Caco-2 (cell line): ENCODE measurements at regions of chr6 and their contacts with region 1.

Region 1: GRCh38 chr6:91500689-91501303 is 913.9 kb upstream of the MAP3K7 start:
- DNase-seq: no peak
- H3K4me3 ChIP-seq: no peak overlapping the region
- H3K4me3 Mint-ChIP-seq: no peak overlapping the region
- H3K27ac Mint-ChIP-seq: no peak overlapping the region
- H3K4me1 ChIP-seq: no peaks in the 10 kb centered on the region
- H3K4me1 Mint-ChIP-seq: no peaks in the 10 kb centered on the region
- H3K27me3 ChIP-seq: no peaks in the 10 kb centered on the region
- H3K27me3 Mint-ChIP-seq: no peaks in the 10 kb centered on the region
- CTCF ChIP-seq: no peak

Region 2: GRCh38 chr6:89667872-89668556 is 1832.8 kb before region 1 on chr6:
- CTCF ChIA-PET with region 1: interaction called, 11 read pairs
- POLR2A ChIA-PET with region 1: no interaction called
- intact Hi-C with region 1: no loop called
- DNase-seq: no peak
- H3K4me3 ChIP-seq: no peak overlapping the region
- H3K4me3 Mint-ChIP-seq: no peak overlapping the region
- H3K27ac Mint-ChIP-seq: no peak overlapping the region
- H3K4me1 ChIP-seq: no peaks in the 10 kb centered on the region
- H3K4me1 Mint-ChIP-seq: no peaks in the 10 kb centered on the region
- H3K27me3 ChIP-seq: no peaks in the 10 kb centered on the region
- H3K27me3 Mint-ChIP-seq: no peaks in the 10 kb centered on the region
- CTCF ChIP-seq: no peak

Region 3: GRCh38 chr6:91387290-91388062 is 113.3 kb before region 1 on chr6:
- CTCF ChIA-PET with region 1: no interaction called
- POLR2A ChIA-PET with region 1: no interaction called
- intact Hi-C with region 1: no loop called
- DNase-seq: no peak
- H3K4me3 ChIP-seq: no peak overlapping the region
- H3K4me3 Mint-ChIP-seq: no peak overlapping the region
- H3K27ac Mint-ChIP-seq: no peak overlapping the region
- H3K4me1 ChIP-seq: no peaks in the 10 kb centered on the region
- H3K4me1 Mint-ChIP-seq: no peaks in the 10 kb centered on the region
- H3K27me3 ChIP-seq: no peaks in the 10 kb centered on the region
- H3K27me3 Mint-ChIP-seq: no peaks in the 10 kb centered on the region
- CTCF ChIP-seq: no peak